ENCODE measurements at regions of chr2 and their contacts with region 1.

Region 1: DNA sequence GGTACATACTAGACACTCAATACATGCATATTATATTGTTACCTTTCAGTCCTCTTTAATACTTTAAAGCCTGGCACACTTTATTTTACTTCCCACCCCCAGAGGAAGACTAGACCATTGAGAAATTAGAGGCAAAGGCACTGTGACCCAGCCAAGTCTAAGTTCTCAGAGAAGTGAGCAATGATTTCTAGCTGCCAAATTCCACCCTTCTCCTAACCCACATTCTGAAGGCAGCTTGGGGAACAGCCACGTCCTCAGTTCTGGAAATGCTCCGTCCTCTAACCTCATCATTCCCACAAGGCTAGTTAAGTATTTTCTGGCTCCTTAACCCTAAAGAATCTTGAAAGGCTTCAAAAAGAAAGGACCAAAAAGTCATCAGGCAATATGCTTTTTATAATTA is 86.6 kb downstream of the COL5A2 start:
- DNase-seq: peak; percentile 35
- ATAC-seq: peak; percentile 82 to 91

Region 2: DNA sequence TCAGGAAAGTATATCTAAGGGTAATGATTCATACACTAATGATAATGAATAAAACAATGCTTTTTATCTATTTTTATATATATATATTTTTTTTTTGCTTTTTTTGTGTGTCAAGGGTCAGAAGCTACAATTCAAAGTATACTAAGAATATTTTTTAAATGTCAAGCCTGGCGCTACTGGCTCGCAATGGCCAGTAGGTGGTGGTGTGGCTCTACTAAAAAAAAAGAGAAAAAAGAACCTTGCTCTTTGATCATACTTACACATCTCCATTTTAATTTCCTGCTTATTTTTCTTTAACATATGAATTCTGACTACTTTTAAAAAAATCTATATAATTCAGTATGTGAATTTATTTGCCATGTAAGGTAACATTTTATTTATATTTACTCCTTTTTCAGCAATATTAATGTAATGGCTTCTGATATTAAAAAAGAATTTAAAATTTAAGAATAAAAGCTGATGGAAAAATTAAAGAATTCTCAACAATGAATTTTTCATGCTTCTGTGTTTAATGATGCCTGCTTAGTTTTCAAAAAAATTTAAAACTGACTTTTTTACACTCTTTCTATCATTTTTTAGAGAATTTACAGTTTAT is 568.3 kb before region 1 on chr2:
- intact Hi-C with region 1: no loop called
- DNase-seq: peak; percentile 19
- ATAC-seq: peak in 1 of 2 donors; percentile 44

Region 3: GRCh38 chr2:189049709-189050164 is 43.2 kb before region 1 on chr2:
- intact Hi-C with region 1: no loop called
- DNase-seq: no peak
- ATAC-seq: no peak

Region 4: GRCh38 chr2:189287982-189288521 is 195.1 kb after region 1 on chr2:
- intact Hi-C with region 1: loop called in 1 of 2 experiments (anchors 2 kb)
- DNase-seq: no peak
- ATAC-seq: peak; percentile 63 to 67

Region 5: DNA sequence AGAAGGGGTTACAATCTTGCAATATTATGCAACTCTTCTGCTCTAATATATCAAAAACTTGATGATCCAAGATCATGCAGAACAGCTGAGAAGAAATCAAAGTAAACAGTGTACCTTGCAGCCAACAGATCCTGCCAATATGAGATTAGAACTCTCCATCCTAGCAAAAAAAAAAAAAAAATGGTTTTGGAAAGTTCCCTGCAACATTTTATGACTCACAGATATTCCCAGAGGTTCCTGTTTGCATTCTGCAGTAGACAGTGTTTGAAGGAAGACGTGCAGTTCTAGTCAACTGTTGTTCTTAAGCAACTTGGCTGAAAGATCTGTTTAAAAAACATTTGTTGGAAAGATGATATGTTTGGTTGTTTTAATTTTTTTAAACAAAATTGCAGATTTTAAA is 244.7 kb after region 1 on chr2:
- intact Hi-C with region 1: no loop called
- DNase-seq: no peak
- ATAC-seq: peak; percentile 80 to 94

Region 6: GRCh38 chr2:189412330-189412953 is 319.5 kb after region 1 on chr2:
- intact Hi-C with region 1: loop called in 1 of 2 experiments (anchors 5 kb)
- DNase-seq: no peak
- ATAC-seq: peak; percentile 71 to 78

Region 7: DNA sequence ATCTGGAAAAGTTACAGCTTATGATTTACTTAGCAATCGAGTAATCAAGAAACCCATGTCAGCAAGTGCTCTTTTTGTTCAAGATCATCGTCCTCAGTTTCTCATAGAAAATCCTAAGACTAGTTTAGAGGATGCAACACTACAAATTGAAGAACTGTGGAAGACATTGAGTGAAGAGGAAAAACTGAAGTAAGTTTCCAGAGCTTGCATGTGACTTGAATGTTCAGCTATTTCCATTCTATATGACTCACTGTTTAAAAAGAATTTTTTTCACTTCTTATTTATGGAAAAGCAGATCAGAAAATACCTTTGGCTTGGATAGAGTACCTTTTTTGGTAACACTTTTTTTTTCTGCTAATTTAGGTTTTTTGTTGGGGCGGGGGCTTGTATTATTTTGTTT is 762.0 kb after region 1 on chr2:
- intact Hi-C with region 1: no loop called
- DNase-seq: no peak
- ATAC-seq: no peak